Kidney (tissue), 22 donors: ENCODE measurements at regions of chr17 and their contacts with region 1.

Region 1: GRCh38 chr17:78112518-78113226 is 15.9 kb downstream of the TMC6 start:
- DNase-seq: peak; percentile 64 to 88 (median 77)
- H3K4me3 ChIP-seq: no peak overlapping the region
- H3K27ac ChIP-seq: no peak overlapping the region
- H3K4me1 ChIP-seq: peaks cover 0 to 5% (median 0%) of the 10 kb centered on the region in 3 donors
- H3K27me3 ChIP-seq: no peaks in the 10 kb centered on the region
- CTCF ChIP-seq: peak; percentile 98

Region 2: DNA sequence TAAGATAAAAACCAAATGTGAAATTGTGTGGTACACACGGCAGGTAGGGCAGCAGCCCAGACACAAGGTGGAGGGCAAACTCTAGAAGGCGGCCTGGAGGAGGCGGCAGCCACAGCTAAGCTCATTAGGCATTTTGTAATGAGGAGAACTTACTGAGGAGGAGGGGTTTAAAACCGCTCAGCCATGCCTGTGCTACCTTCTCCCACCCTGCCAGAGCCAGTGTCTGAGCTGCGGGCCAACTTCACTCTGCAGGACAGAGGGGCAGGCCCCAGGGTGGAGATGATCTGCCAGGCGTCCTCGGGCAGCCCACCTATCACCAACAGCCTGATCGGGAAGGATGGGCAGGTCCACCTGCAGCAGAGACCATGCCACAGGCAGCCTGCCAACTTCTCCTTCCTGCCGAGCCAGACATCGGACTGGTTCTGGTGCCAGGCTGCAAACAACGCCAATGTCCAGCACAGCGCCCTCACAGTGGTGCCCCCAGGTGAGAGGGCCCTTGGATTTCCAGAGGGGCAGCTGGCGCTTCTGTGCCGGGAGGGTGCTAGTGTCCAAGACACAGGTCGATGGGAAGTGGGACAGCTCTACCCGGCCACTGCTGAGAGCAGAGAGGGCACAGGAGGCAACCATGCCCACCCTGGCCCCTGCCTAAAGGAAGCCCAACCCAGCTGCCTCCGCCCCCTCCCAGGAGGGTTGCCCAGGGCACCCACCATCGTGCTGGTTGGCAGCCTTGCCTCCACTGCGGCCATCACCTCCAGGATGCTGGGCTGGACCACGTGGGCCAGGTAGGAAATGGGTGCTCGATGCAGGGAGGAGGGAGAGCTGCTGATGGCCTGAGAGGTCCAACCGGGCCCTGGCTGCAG is 51.4 kb after region 1 on chr17:
- intact Hi-C with region 1: no loop called
- DNase-seq: no peak
- H3K4me3 ChIP-seq: no peak overlapping the region
- H3K27ac ChIP-seq: no peak overlapping the region
- H3K4me1 ChIP-seq: peaks cover 0 to 4% (median 0%) of the 10 kb centered on the region in 3 donors
- H3K27me3 ChIP-seq: no peaks in the 10 kb centered on the region
- CTCF ChIP-seq: no peak

Region 3: DNA sequence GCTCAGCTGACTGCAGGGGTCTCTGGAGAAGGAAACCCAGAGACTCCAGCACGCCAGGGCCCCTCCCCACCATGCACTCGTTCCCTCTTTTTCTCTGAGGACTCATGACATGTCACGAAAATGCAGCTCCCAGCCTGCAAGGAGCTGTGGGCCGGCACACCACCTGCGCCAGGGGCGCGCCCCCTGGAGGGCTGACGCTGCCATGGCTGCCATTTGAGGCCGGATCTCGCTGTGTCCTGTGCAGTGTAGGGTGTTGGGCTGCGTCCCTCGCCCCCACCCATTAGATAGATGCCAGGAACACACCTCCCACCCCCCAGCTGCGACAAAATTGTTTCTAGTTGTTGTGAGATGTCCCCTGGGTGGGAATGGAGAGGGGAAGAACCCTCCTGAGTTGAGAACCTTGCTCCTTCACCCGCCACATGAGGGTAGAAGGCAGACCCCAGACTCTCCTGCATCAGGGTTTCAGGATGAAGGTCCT is 63.9 kb after region 1 on chr17:
- intact Hi-C with region 1: loop called (anchors 10 kb)
- DNase-seq: peak in 4 of 5 donors; percentile 69 to 86 (median 76)
- H3K4me3 ChIP-seq: no peak overlapping the region
- H3K27ac ChIP-seq: peak overlapping the region in 1 of 2 donors; percentile 51
- H3K4me1 ChIP-seq: peaks cover 0 to 42% (median 36%) of the 10 kb centered on the region in 3 donors
- H3K27me3 ChIP-seq: no peaks in the 10 kb centered on the region
- CTCF ChIP-seq: peak; percentile 92

Region 4: GRCh38 chr17:78241277-78242023 is 128.8 kb after region 1 on chr17:
- intact Hi-C with region 1: loop called (anchors 10 kb)
- DNase-seq: peak in 1 of 5 donors; percentile 58
- H3K4me3 ChIP-seq: no peak overlapping the region
- H3K27ac ChIP-seq: no peak overlapping the region
- H3K4me1 ChIP-seq: no peaks in the 10 kb centered on the region
- H3K27me3 ChIP-seq: no peaks in the 10 kb centered on the region
- CTCF ChIP-seq: no peak